Right lobe of liver (tissue), 6 donors: ENCODE measurements at regions of chr18 and their contacts with region 1.

Region 1: DNA sequence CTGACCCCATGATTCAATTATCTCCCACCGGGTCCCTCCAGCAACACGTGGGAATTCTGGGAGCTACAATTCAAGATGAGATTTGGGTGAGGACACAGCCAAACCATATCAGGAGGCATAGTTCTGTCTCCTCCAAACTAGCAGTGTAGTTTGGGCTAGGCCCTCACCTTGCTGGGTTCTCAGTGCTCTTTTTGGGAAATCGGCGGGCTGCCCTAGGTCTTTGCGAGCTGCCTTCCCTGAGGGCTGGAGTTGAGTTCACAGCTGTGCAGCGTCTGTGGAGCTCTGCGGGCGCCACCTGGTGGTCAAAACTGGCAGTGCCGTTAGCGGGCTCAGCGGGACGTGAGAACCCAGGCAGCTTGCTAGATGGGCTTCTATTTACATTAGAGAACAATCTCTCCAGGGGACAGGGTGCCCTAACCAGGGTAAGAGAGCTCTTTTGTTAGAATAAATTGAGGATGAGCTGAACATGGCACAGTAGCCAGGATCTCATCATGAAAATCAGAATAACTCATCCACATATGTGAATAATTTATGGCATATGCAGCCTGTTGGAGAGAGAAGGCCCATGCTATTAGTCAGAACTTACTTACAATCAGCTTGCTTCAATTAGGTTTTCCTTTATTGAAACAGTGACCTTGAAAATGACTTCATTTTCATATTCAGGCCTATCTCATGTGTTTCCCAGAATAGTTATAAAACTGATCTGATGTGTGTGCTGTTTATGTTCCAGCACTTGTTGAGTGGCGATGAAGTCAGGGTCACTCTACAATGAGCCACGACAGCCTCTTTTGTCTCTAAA is 27.4 kb upstream of the YES1 start:
- DNase-seq: peak; percentile 85 to 86 (median 85)
- ATAC-seq: peak; percentile 95 to 98 (median 96)
- H3K4me3 ChIP-seq: no peak overlapping the region
- H3K27ac ChIP-seq: peak overlapping the region in 1 of 3 donors; percentile 22
- H3K4me1 ChIP-seq: peaks cover 0 to 10% (median 0%) of the 10 kb centered on the region in 4 donors
- H3K27me3 ChIP-seq: no peaks in the 10 kb centered on the region
- CTCF ChIP-seq: peak; percentile 91 to 99 (median 98)
- POLR2A ChIP-seq: no peak

Region 2: GRCh38 chr18:715626-716025 is 123.8 kb before region 1 on chr18:
- intact Hi-C with region 1: no loop called
- DNase-seq: no peak
- ATAC-seq: no peak
- H3K4me3 ChIP-seq: no peak overlapping the region
- H3K27ac ChIP-seq: no peak overlapping the region
- H3K4me1 ChIP-seq: peaks cover 0 to 14% (median 0%) of the 10 kb centered on the region in 4 donors
- H3K27me3 ChIP-seq: no peaks in the 10 kb centered on the region
- CTCF ChIP-seq: no peak
- POLR2A ChIP-seq: no peak

Region 3: DNA sequence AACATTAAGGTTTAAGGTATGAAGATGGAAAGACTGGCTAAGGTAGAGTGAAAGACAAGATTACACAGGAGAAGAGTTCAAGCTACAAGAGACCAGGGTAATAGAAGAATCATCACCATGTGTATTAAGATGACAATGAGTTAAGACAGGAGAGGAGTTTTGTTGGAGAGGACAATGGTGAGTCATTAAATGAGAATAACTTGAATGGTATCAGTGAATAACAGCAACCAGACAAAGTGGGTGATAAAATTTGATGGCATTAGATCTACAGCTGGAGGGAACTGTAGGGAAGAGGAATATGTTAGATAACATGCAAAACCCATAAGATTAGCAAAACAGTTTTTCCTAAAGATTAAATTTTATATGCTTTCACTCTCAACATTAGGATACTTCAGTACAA is 108.2 kb before region 1 on chr18:
- intact Hi-C with region 1: loop called in 1 of 2 experiments (anchors 10 kb)
- DNase-seq: no peak
- ATAC-seq: no peak
- H3K4me3 ChIP-seq: no peak overlapping the region
- H3K27ac ChIP-seq: no peak overlapping the region
- H3K4me1 ChIP-seq: no peaks in the 10 kb centered on the region
- H3K27me3 ChIP-seq: no peaks in the 10 kb centered on the region
- CTCF ChIP-seq: no peak
- POLR2A ChIP-seq: no peak

Region 4: GRCh38 chr18:1173593-1173992 is 334.2 kb after region 1 on chr18:
- intact Hi-C with region 1: no loop called
- DNase-seq: no peak
- ATAC-seq: no peak
- H3K4me3 ChIP-seq: no peak overlapping the region
- H3K27ac ChIP-seq: no peak overlapping the region
- H3K4me1 ChIP-seq: no peaks in the 10 kb centered on the region
- H3K27me3 ChIP-seq: no peaks in the 10 kb centered on the region
- CTCF ChIP-seq: no peak
- POLR2A ChIP-seq: no peak